Ovary (tissue), 10 donors: ENCODE measurements at regions of chr5 and their contacts with region 1.

Region 1: GRCh38 chr5:156513123-156513815 is 186.3 kb downstream of the SGCD start:
- DNase-seq: no peak
- H3K4me3 ChIP-seq: no peak overlapping the region
- H3K27ac ChIP-seq: no peak overlapping the region
- H3K4me1 ChIP-seq: no peaks in the 10 kb centered on the region
- H3K27me3 ChIP-seq: no peaks in the 10 kb centered on the region
- CTCF ChIP-seq: no peak
- EP300 ChIP-seq: no peak
- POLR2A ChIP-seq: no peak

Region 2: GRCh38 chr5:156475182-156476157 is 37.8 kb before region 1 on chr5:
- intact Hi-C with region 1: no loop called
- DNase-seq: peak; percentile 62 to 78 (median 65)
- H3K4me3 ChIP-seq: no peak overlapping the region
- H3K27ac ChIP-seq: no peak overlapping the region
- H3K4me1 ChIP-seq: peaks cover 15% of the 10 kb centered on the region
- H3K27me3 ChIP-seq: no peaks in the 10 kb centered on the region
- CTCF ChIP-seq: no peak
- EP300 ChIP-seq: no peak
- POLR2A ChIP-seq: no peak

Region 3: DNA sequence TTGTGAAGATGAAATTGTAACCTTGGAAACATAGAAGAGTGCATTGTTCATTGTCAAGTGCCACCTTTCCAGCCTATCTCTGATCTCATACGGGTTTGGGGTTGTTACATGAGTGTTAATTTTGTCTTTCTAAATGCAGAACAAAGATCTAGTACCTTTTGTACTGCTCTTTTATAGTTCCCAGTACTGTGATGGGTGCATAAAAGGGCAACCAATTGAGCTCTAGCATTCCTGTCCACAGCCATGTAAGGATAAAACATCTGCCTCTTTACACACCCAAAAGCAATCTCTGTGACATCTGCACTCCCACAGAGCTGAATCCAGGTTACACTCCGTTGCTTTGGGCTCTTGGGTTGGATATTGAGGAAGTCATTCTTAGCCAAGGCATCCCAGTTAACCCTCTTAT is 68.9 kb after region 1 on chr5:
- intact Hi-C with region 1: loop called in 1 of 4 experiments (anchors 2 kb)
- DNase-seq: no peak
- H3K4me3 ChIP-seq: no peak overlapping the region
- H3K27ac ChIP-seq: no peak overlapping the region
- H3K4me1 ChIP-seq: peaks cover 4% of the 10 kb centered on the region
- H3K27me3 ChIP-seq: no peaks in the 10 kb centered on the region
- CTCF ChIP-seq: no peak
- EP300 ChIP-seq: no peak
- POLR2A ChIP-seq: no peak